CD8-positive, alpha-beta T cell (primary cell): ENCODE measurements at regions of chr15 and their contacts with region 1.

Region 1: DNA sequence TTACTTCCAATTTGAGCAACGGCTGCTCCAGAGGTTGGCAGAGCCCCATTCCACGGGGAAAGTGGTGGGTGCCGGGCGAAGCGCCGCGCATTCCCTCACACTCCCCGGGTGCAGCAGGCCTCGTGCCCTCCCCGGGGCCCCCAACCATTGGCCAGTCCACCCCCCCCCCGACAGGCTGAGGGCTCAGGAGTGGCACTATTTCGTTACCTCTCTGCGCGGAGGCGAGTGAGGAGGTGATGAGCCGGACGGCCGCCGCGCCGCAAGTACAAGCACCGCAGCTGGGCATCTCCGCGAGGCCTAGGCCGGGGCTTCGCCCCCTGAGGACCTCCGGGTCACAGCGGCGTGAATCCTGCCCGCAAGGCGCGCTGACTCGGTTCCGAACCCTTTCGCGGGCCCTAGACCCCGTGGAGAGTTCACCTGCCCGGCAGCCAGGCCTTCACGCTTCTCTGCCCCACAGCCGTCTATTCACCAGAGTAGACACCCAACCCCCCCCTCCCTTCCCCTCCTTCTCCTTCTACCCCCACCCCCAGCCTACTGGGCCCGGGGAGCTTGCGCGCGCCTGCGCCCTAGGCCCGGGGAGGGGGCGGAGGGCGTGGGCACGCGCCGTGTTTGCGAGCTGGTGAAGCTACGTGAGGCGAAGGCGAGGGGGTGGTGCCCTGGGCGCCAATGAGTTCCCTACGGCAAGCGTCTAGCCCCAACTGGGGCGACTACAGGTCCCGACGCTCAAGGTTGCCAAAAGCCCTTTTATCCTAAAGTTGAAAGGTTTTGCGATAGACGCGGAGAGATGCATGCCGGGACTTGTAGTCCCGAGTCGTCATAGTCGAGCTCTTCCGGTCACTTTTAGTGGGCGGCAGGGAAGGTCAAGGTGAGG is at the start of gene CLPX:
- DNase-seq: peak; percentile 80 to 98 (median 92)
- ATAC-seq: peak; percentile 98
- H3K4me3 ChIP-seq: peak within 1 kb of the TSS; percentile 98 to 99
- H3K4me3 Mint-ChIP-seq: peak within 1 kb of the TSS; percentile 95
- H3K27ac ChIP-seq: peak within 1 kb of the TSS; percentile 75 to 88
- H3K27ac Mint-ChIP-seq: peak within 1 kb of the TSS; percentile 94
- H3K4me1 ChIP-seq: peaks cover 15% of the 10 kb centered on the region
- H3K4me1 Mint-ChIP-seq: peaks cover 28% of the 10 kb centered on the region
- H3K27me3 ChIP-seq: no peaks in the 10 kb centered on the region
- H3K27me3 Mint-ChIP-seq: no peaks in the 10 kb centered on the region
- CTCF ChIP-seq: no peak
- total RNA-seq, gene CLPX: 29.0 to 31.7 TPM

Region 2: DNA sequence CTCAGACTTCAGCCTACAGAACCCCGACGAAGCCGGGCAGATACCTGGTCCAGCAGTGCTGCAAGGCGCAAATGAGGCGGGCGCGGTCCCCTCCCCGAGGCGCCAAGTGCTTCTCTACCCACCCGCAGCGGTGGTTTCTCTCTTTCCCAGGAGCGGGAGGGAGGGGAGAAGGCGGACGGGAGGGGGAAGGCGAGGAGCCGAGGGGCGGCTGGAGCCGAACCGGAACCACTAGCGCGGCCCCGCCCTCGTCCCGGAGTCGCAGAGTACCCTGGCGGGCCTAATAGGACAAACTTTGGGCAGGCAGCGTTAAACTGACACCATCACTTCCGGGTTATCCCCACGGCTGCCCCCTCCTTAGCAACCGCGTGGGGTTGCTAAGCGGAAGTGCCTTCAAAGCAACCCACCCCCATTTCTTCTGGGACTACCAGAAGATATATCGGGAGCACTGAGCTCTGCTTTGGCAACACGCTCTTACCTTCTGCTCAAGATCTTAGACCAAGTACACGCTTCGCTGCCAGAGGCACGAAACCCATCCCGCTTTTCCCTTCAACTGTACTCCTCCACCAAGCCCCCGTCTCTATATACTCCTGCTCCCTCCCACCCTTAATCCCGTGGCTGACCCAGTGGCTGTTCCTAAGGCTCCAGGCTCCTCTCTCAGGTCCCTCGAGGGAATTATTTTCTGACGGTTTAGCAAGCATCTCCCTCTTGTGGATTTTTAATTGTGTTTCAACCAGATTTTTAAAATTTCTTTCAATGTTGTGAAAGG is 829.0 kb before region 1 on chr15 and contains the start of gene CSNK1G1:
- CTCF ChIA-PET with region 1: no interaction called
- POLR2A ChIA-PET with region 1: no interaction called
- intact Hi-C with region 1: loop called in 1 of 2 experiments (anchors 2 kb)
- DNase-seq: peak; percentile 77 to 97 (median 92)
- ATAC-seq: peak; percentile 96
- H3K4me3 ChIP-seq: peak within 1 kb of the TSS; percentile 86 to 91
- H3K4me3 Mint-ChIP-seq: peak within 1 kb of the TSS; percentile 94
- H3K27ac ChIP-seq: peak within 1 kb of the TSS; percentile 67 to 74
- H3K27ac Mint-ChIP-seq: peak within 1 kb of the TSS; percentile 89
- H3K4me1 ChIP-seq: peaks cover 9% of the 10 kb centered on the region
- H3K4me1 Mint-ChIP-seq: peaks cover 18% of the 10 kb centered on the region
- H3K27me3 ChIP-seq: no peaks in the 10 kb centered on the region
- H3K27me3 Mint-ChIP-seq: no peaks in the 10 kb centered on the region
- CTCF ChIP-seq: peak; percentile 43
- total RNA-seq, gene CSNK1G1: 10.0 to 12.9 TPM

Region 3: GRCh38 chr15:64478863-64479262 is 706.2 kb before region 1 on chr15:
- CTCF ChIA-PET with region 1: no interaction called
- POLR2A ChIA-PET with region 1: no interaction called
- intact Hi-C with region 1: no loop called
- DNase-seq: no peak
- ATAC-seq: no peak
- H3K4me3 ChIP-seq: no peak overlapping the region
- H3K4me3 Mint-ChIP-seq: no peak overlapping the region
- H3K27ac ChIP-seq: no peak overlapping the region
- H3K27ac Mint-ChIP-seq: peak overlapping the region; percentile 6
- H3K4me1 ChIP-seq: peaks cover 12% of the 10 kb centered on the region
- H3K4me1 Mint-ChIP-seq: peaks cover 43% of the 10 kb centered on the region
- H3K27me3 ChIP-seq: no peaks in the 10 kb centered on the region
- H3K27me3 Mint-ChIP-seq: no peaks in the 10 kb centered on the region
- CTCF ChIP-seq: no peak

Region 4: GRCh38 chr15:64989416-64990167 is 195.5 kb before region 1 on chr15 and contains the start of gene SPG21:
- CTCF ChIA-PET with region 1: no interaction called
- POLR2A ChIA-PET with region 1: no interaction called
- intact Hi-C with region 1: loop called in 1 of 2 experiments (anchors 2 kb)
- DNase-seq: peak; percentile 77 to 96 (median 91)
- ATAC-seq: peak; percentile 88
- H3K4me3 ChIP-seq: peak within 1 kb of the TSS; percentile 73 to 88
- H3K4me3 Mint-ChIP-seq: peak within 1 kb of the TSS; percentile 96
- H3K27ac ChIP-seq: peak within 1 kb of the TSS; percentile 68 to 84
- H3K27ac Mint-ChIP-seq: peak within 1 kb of the TSS; percentile 94
- H3K4me1 ChIP-seq: peaks cover 12% of the 10 kb centered on the region
- H3K4me1 Mint-ChIP-seq: peaks cover 45% of the 10 kb centered on the region
- H3K27me3 ChIP-seq: no peaks in the 10 kb centered on the region
- H3K27me3 Mint-ChIP-seq: no peaks in the 10 kb centered on the region
- CTCF ChIP-seq: no peak
- total RNA-seq, gene SPG21: 25.1 to 28.2 TPM

Region 5: GRCh38 chr15:65286704-65287519 is 101.8 kb after region 1 on chr15 and contains the start of gene PARP16:
- CTCF ChIA-PET with region 1: interaction called, 5 read pairs
- POLR2A ChIA-PET with region 1: interaction called, 17 read pairs
- intact Hi-C with region 1: loop called (anchors 1 kb)
- DNase-seq: peak; percentile 80 to 97 (median 92)
- ATAC-seq: peak; percentile 94
- H3K4me3 ChIP-seq: peak within 1 kb of the TSS; percentile 71 to 88
- H3K4me3 Mint-ChIP-seq: peak within 1 kb of the TSS; percentile 90
- H3K27ac ChIP-seq: peak within 1 kb of the TSS; percentile 69 to 81
- H3K27ac Mint-ChIP-seq: peak within 1 kb of the TSS; percentile 86
- H3K4me1 ChIP-seq: peaks cover 27% of the 10 kb centered on the region
- H3K4me1 Mint-ChIP-seq: peaks cover 45% of the 10 kb centered on the region
- H3K27me3 ChIP-seq: no peaks in the 10 kb centered on the region
- H3K27me3 Mint-ChIP-seq: no peaks in the 10 kb centered on the region
- CTCF ChIP-seq: no peak
- total RNA-seq, gene PARP16: 9.9 to 11.5 TPM

Region 6: GRCh38 chr15:65384895-65385858 is 200.1 kb after region 1 on chr15:
- CTCF ChIA-PET with region 1: interaction called, 3 read pairs
- POLR2A ChIA-PET with region 1: no interaction called
- intact Hi-C with region 1: loop called (anchors 1 kb)
- DNase-seq: peak; percentile 68 to 88 (median 83)
- ATAC-seq: peak; percentile 88
- H3K4me3 ChIP-seq: peak overlapping the region; percentile 72 to 89
- H3K4me3 Mint-ChIP-seq: peak overlapping the region; percentile 90
- H3K27ac ChIP-seq: peak overlapping the region; percentile 1 to 60
- H3K27ac Mint-ChIP-seq: peak overlapping the region; percentile 18
- H3K4me1 ChIP-seq: peaks cover 7% of the 10 kb centered on the region
- H3K4me1 Mint-ChIP-seq: peaks cover 12% of the 10 kb centered on the region
- H3K27me3 ChIP-seq: no peaks in the 10 kb centered on the region
- H3K27me3 Mint-ChIP-seq: peaks cover 13% of the 10 kb centered on the region
- CTCF ChIP-seq: peak; percentile 78

Region 7: GRCh38 chr15:65666257-65666656 is 481.2 kb after region 1 on chr15:
- CTCF ChIA-PET with region 1: no interaction called
- POLR2A ChIA-PET with region 1: no interaction called
- intact Hi-C with region 1: no loop called
- DNase-seq: no peak
- ATAC-seq: no peak
- H3K4me3 ChIP-seq: no peak overlapping the region
- H3K4me3 Mint-ChIP-seq: no peak overlapping the region
- H3K27ac ChIP-seq: no peak overlapping the region
- H3K27ac Mint-ChIP-seq: no peak overlapping the region
- H3K4me1 ChIP-seq: no peaks in the 10 kb centered on the region
- H3K4me1 Mint-ChIP-seq: no peaks in the 10 kb centered on the region
- H3K27me3 ChIP-seq: no peaks in the 10 kb centered on the region
- H3K27me3 Mint-ChIP-seq: no peaks in the 10 kb centered on the region
- CTCF ChIP-seq: no peak

Region 8: GRCh38 chr15:66497502-66498455 is 1312.7 kb after region 1 on chr15 and contains the start of gene SNAPC5:
- CTCF ChIA-PET with region 1: no interaction called
- POLR2A ChIA-PET with region 1: no interaction called
- intact Hi-C with region 1: loop called in 1 of 2 experiments (anchors 10 kb)
- DNase-seq: peak; percentile 95 to 99 (median 97)
- ATAC-seq: peak; percentile 94
- H3K4me3 ChIP-seq: peak within 1 kb of the TSS; percentile 89 to 98
- H3K4me3 Mint-ChIP-seq: peak within 1 kb of the TSS; percentile 96
- H3K27ac ChIP-seq: peak within 1 kb of the TSS; percentile 93 to 96
- H3K27ac Mint-ChIP-seq: peak within 1 kb of the TSS; percentile 97
- H3K4me1 ChIP-seq: peaks cover 32% of the 10 kb centered on the region
- H3K4me1 Mint-ChIP-seq: peaks cover 57% of the 10 kb centered on the region
- H3K27me3 ChIP-seq: no peaks in the 10 kb centered on the region
- H3K27me3 Mint-ChIP-seq: no peaks in the 10 kb centered on the region
- CTCF ChIP-seq: peak; percentile 98
- total RNA-seq, gene SNAPC5: 22.3 to 25.3 TPM